ENCODE measurements at regions of chr5 and their contacts with region 1.

Region 1: GRCh38 chr5:120405286-120405864 is 58.7 kb upstream of the PRR16 start:
- DNase-seq: peak; percentile 80
- H3K4me3 ChIP-seq: no peak overlapping the region
- H3K27ac ChIP-seq: peak overlapping the region; percentile 53
- H3K4me1 ChIP-seq: peaks cover 17% of the 10 kb centered on the region
- H3K27me3 ChIP-seq: no peaks in the 10 kb centered on the region
- CTCF ChIP-seq: no peak
- POLR2A ChIP-seq: no peak

Region 2: DNA sequence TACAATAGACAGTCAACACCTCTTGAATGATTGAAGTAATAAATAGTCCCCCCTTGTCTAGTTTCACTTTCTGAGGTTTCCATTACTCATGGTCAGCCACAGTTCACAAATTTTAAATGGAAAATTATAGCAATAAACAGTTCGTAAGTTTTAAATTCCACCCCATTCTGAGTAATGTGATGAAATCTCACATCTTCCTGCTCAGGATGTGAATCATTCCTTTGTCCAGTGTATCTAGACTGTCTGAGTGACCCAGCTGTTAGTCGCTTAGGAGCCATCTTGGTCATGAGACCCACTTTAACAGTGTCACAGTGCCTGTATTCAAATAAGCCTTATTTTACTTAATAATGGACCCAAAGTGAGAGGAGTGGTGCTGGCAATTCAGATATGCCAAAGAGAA is 252.9 kb before region 1 on chr5:
- CTCF ChIA-PET with region 1: no interaction called
- POLR2A ChIA-PET with region 1: no interaction called
- dilution Hi-C with region 1: no loop called
- intact Hi-C with region 1: loop called (anchors 2 kb)
- DNase-seq: peak; percentile 91
- H3K4me3 ChIP-seq: no peak overlapping the region
- H3K27ac ChIP-seq: peak overlapping the region; percentile 88
- H3K4me1 ChIP-seq: peaks cover 10% of the 10 kb centered on the region
- H3K27me3 ChIP-seq: no peaks in the 10 kb centered on the region
- CTCF ChIP-seq: no peak
- POLR2A ChIP-seq: no peak

Region 3: DNA sequence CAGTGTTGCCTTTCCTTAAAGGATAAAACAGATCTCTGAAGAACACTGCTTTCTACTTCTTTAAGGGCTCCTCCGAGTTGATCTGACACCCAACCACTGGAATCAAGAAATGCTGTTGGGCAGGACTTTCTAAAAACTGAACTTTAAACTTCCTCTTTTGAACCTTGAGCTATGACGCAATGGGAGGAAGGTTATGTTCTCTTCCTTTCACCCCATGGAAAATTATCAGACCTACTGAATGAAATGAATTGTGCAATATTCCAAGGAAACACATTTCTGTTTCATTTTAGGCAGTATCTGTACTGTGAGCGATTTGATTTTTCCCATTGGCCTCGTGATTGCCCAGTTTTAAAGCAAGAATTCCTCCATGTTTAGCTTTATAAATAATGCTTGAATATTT is 147.3 kb before region 1 on chr5:
- CTCF ChIA-PET with region 1: no interaction called
- POLR2A ChIA-PET with region 1: no interaction called
- dilution Hi-C with region 1: no loop called
- intact Hi-C with region 1: no loop called
- DNase-seq: no peak
- H3K4me3 ChIP-seq: no peak overlapping the region
- H3K27ac ChIP-seq: no peak overlapping the region
- H3K4me1 ChIP-seq: no peaks in the 10 kb centered on the region
- H3K27me3 ChIP-seq: no peaks in the 10 kb centered on the region
- CTCF ChIP-seq: no peak
- POLR2A ChIP-seq: no peak

Region 4: GRCh38 chr5:120388016-120388781 is 17.2 kb before region 1 on chr5:
- CTCF ChIA-PET with region 1: interaction called, 8 read pairs
- POLR2A ChIA-PET with region 1: no interaction called
- dilution Hi-C with region 1: no loop called
- intact Hi-C with region 1: loop called (anchors 2 kb)
- DNase-seq: peak; percentile 57
- H3K4me3 ChIP-seq: no peak overlapping the region
- H3K27ac ChIP-seq: no peak overlapping the region
- H3K4me1 ChIP-seq: peaks cover 12% of the 10 kb centered on the region
- H3K27me3 ChIP-seq: no peaks in the 10 kb centered on the region
- CTCF ChIP-seq: no peak
- POLR2A ChIP-seq: no peak